ENCODE measurements at regions of chr3 and their contacts with region 1.

Region 1: DNA sequence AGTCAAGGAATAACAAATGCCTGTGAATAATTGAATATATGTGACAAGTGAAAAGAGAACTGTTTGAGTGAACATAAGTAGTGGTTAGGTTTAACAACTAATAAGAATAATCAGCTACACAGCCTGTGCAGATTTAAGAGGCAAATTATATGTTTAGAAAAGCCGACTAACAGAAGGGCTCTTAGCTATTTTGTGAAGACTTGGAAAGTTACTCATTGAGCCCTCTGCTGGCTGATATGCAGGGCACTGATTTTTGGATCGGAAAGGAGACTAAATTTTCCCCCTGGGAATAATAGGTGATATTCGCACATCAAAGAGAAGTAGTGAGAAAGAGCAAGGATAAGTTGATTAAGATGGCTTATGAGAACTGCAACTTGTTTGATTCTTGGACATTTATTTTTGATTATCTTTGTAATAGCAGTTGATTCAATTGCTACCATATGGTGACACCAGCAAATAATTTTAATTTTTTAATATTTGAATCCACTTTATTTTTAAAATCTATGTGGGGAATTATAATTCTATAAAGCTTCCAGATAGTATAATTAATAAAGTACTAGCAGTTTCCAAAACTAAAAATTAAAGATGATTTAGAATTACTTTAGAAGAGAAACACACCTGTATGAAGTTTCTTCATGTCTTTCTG is 156.2 kb downstream of the NLGN1 start:
- DNase-seq: no peak
- H3K4me3 ChIP-seq: no peak overlapping the region
- H3K27ac ChIP-seq: no peak overlapping the region
- H3K4me1 ChIP-seq: no peaks in the 10 kb centered on the region
- H3K27me3 ChIP-seq: no peaks in the 10 kb centered on the region
- CTCF ChIP-seq: peak in 3 of 4 experiments; percentile 53 to 59 (median 54)
- POLR2A ChIP-seq: no peak

Region 2: GRCh38 chr3:173371848-173372487 is 181.8 kb before region 1 on chr3:
- intact Hi-C with region 1: loop called (anchors 5 kb)
- DNase-seq: peak; percentile 5
- H3K4me3 ChIP-seq: no peak overlapping the region
- H3K27ac ChIP-seq: no peak overlapping the region
- H3K4me1 ChIP-seq: no peaks in the 10 kb centered on the region
- H3K27me3 ChIP-seq: no peaks in the 10 kb centered on the region
- CTCF ChIP-seq: peak in 3 of 4 experiments; percentile 44 to 57 (median 55)
- POLR2A ChIP-seq: no peak

Region 3: GRCh38 chr3:173411375-173411973 is 142.3 kb before region 1 on chr3:
- intact Hi-C with region 1: loop called (anchors 10 kb)
- DNase-seq: no peak
- H3K4me3 ChIP-seq: no peak overlapping the region
- H3K27ac ChIP-seq: no peak overlapping the region
- H3K4me1 ChIP-seq: no peaks in the 10 kb centered on the region
- H3K27me3 ChIP-seq: no peaks in the 10 kb centered on the region
- CTCF ChIP-seq: peak in 3 of 4 experiments; percentile 23 to 40 (median 27)
- POLR2A ChIP-seq: no peak